CD8-positive, alpha-beta T cell (primary cell): ENCODE measurements at regions of chr15 and their contacts with region 1.

Region 1: DNA sequence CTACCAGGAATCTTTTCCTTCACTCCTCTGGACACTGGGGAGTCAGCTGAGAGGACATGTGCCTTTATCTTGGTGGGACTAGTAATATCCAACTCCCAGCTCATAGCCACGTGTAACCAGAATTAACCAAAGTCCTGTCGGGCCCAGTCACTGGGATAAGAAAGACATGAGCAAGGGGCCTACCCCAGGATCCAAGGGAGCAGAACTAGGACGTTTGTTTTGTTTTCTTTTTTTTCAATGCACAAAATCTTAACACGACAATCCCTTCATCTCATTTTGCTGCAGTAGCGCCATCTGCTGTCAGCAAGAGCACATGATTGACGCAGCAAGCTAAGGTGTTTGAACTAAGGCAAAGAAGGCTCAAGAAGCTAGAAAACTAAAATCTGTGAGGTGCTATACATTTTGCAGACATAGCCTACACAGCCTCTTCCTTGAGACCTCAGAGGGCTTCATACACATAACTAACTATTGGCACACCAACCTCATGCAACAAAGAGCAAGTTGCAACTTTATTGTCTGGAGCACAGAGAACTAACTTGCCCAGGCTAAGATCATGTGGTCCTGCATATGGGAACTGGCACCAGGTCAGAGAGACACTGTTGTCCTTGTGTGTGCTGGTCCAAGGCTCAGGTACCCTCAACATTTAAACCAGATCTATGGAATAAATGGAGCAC is 43.6 kb downstream of the RLBP1 start:
- DNase-seq: peak; percentile 17 to 81 (median 58)
- ATAC-seq: peak; percentile 40
- H3K4me3 ChIP-seq: no peak overlapping the region
- H3K4me3 Mint-ChIP-seq: no peak overlapping the region
- H3K27ac ChIP-seq: no peak overlapping the region
- H3K27ac Mint-ChIP-seq: no peak overlapping the region
- H3K4me1 ChIP-seq: no peaks in the 10 kb centered on the region
- H3K4me1 Mint-ChIP-seq: peaks cover 5% of the 10 kb centered on the region
- H3K27me3 ChIP-seq: no peaks in the 10 kb centered on the region
- H3K27me3 Mint-ChIP-seq: no peaks in the 10 kb centered on the region
- CTCF ChIP-seq: peak; percentile 85

Region 2: DNA sequence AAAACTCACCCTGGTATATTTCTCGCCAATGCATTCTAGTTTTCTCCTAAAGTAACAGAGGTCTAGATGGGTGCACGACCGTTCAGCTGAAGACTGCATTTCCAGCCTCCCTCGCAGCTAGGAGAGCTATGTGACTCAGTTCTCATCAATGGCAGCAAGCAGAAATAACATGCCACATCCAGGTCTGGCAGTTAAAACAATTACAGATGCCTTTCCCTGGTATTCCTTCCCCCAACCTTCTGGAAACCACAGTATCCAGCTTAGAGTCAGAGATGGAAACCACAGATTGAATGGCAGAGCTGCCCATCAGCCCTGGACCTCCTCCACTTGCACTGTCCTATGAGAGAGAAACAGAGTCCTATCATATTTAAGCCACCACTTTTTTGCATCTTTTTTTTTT is 287.3 kb before region 1 on chr15:
- CTCF ChIA-PET with region 1: interaction called, 13 read pairs
- POLR2A ChIA-PET with region 1: interaction called, 6 read pairs
- intact Hi-C with region 1: loop called (anchors 1 kb)
- DNase-seq: no peak
- ATAC-seq: no peak
- H3K4me3 ChIP-seq: no peak overlapping the region
- H3K4me3 Mint-ChIP-seq: no peak overlapping the region
- H3K27ac ChIP-seq: no peak overlapping the region
- H3K27ac Mint-ChIP-seq: no peak overlapping the region
- H3K4me1 ChIP-seq: peaks cover 9% of the 10 kb centered on the region
- H3K4me1 Mint-ChIP-seq: peaks cover 17% of the 10 kb centered on the region
- H3K27me3 ChIP-seq: peaks cover 0 to 5% of the 10 kb centered on the region in 2 experiments
- H3K27me3 Mint-ChIP-seq: no peaks in the 10 kb centered on the region
- CTCF ChIP-seq: no peak

Region 3: GRCh38 chr15:89057504-89058133 is 120.2 kb before region 1 on chr15:
- CTCF ChIA-PET with region 1: interaction called, 109 read pairs
- POLR2A ChIA-PET with region 1: no interaction called
- intact Hi-C with region 1: loop called (anchors 1 kb)
- DNase-seq: peak; percentile 61 to 90 (median 82)
- ATAC-seq: peak; percentile 100
- H3K4me3 ChIP-seq: no peak overlapping the region
- H3K4me3 Mint-ChIP-seq: no peak overlapping the region
- H3K27ac ChIP-seq: no peak overlapping the region
- H3K27ac Mint-ChIP-seq: no peak overlapping the region
- H3K4me1 ChIP-seq: no peaks in the 10 kb centered on the region
- H3K4me1 Mint-ChIP-seq: peaks cover 2% of the 10 kb centered on the region
- H3K27me3 ChIP-seq: no peaks in the 10 kb centered on the region
- H3K27me3 Mint-ChIP-seq: no peaks in the 10 kb centered on the region
- CTCF ChIP-seq: peak; percentile 99

Region 4: GRCh38 chr15:89112341-89112971 is 65.3 kb before region 1 on chr15:
- CTCF ChIA-PET with region 1: interaction called, 4 read pairs
- POLR2A ChIA-PET with region 1: no interaction called
- intact Hi-C with region 1: loop called in 1 of 2 experiments (anchors 10 kb)
- DNase-seq: peak in 1 of 9 experiments; percentile 34
- ATAC-seq: no peak
- H3K4me3 ChIP-seq: no peak overlapping the region
- H3K4me3 Mint-ChIP-seq: no peak overlapping the region
- H3K27ac ChIP-seq: peak overlapping the region in 1 of 2 experiments; percentile 44
- H3K27ac Mint-ChIP-seq: no peak overlapping the region
- H3K4me1 ChIP-seq: peaks cover 9% of the 10 kb centered on the region
- H3K4me1 Mint-ChIP-seq: peaks cover 16% of the 10 kb centered on the region
- H3K27me3 ChIP-seq: no peaks in the 10 kb centered on the region
- H3K27me3 Mint-ChIP-seq: no peaks in the 10 kb centered on the region
- CTCF ChIP-seq: no peak

Region 5: GRCh38 chr15:89150762-89151664 is 26.8 kb before region 1 on chr15:
- CTCF ChIA-PET with region 1: interaction called, 10 read pairs
- POLR2A ChIA-PET with region 1: no interaction called
- intact Hi-C with region 1: no loop called
- DNase-seq: no peak
- ATAC-seq: no peak
- H3K4me3 ChIP-seq: no peak overlapping the region
- H3K4me3 Mint-ChIP-seq: no peak overlapping the region
- H3K27ac ChIP-seq: no peak overlapping the region
- H3K27ac Mint-ChIP-seq: no peak overlapping the region
- H3K4me1 ChIP-seq: no peaks in the 10 kb centered on the region
- H3K4me1 Mint-ChIP-seq: no peaks in the 10 kb centered on the region
- H3K27me3 ChIP-seq: no peaks in the 10 kb centered on the region
- H3K27me3 Mint-ChIP-seq: no peaks in the 10 kb centered on the region
- CTCF ChIP-seq: no peak

Region 6: GRCh38 chr15:89167267-89168176 is 10.2 kb before region 1 on chr15:
- CTCF ChIA-PET with region 1: interaction called, 27 read pairs
- POLR2A ChIA-PET with region 1: no interaction called
- intact Hi-C with region 1: no loop called
- DNase-seq: no peak
- ATAC-seq: no peak
- H3K4me3 ChIP-seq: no peak overlapping the region
- H3K4me3 Mint-ChIP-seq: no peak overlapping the region
- H3K27ac ChIP-seq: no peak overlapping the region
- H3K27ac Mint-ChIP-seq: peak overlapping the region; percentile 50
- H3K4me1 ChIP-seq: no peaks in the 10 kb centered on the region
- H3K4me1 Mint-ChIP-seq: peaks cover 3% of the 10 kb centered on the region
- H3K27me3 ChIP-seq: no peaks in the 10 kb centered on the region
- H3K27me3 Mint-ChIP-seq: no peaks in the 10 kb centered on the region
- CTCF ChIP-seq: no peak